ENCODE measurements at regions of chr6 and their contacts with region 1.

Region 1: GRCh38 chr6:145761584-145761983 is 26.3 kb upstream of the EPM2A start:
- DNase-seq: no peak
- ATAC-seq: no peak
- H3K4me3 ChIP-seq: no peak overlapping the region
- H3K27ac ChIP-seq: no peak overlapping the region
- H3K4me1 ChIP-seq: peaks cover 0 to 5% (median 0%) of the 10 kb centered on the region in 9 donors
- H3K27me3 ChIP-seq: no peaks in the 10 kb centered on the region
- CTCF ChIP-seq: peak in 5 of 9 donors; percentile 12 to 36 (median 24)

Region 2: GRCh38 chr6:145887969-145888368 is 126.4 kb after region 1 on chr6:
- intact Hi-C with region 1: loop called in 2 of 10 experiments (anchors 2 to 10 kb)
- DNase-seq: peak; percentile 14 to 20
- ATAC-seq: peak in 5 of 8 donors; percentile 35 to 54 (median 46)
- H3K4me3 ChIP-seq: no peak overlapping the region
- H3K27ac ChIP-seq: no peak overlapping the region
- H3K4me1 ChIP-seq: peaks cover 0 to 4% (median 0%) of the 10 kb centered on the region in 9 donors
- H3K27me3 ChIP-seq: no peaks in the 10 kb centered on the region
- CTCF ChIP-seq: peak in 8 of 9 donors; percentile 16 to 66 (median 55)